ENCODE measurements at regions of chr20 and their contacts with region 1.

Region 1: GRCh38 chr20:50189681-50190582 is 698 bp upstream of the CEBPB start:
- DNase-seq: peak; percentile 92 to 96
- ATAC-seq: peak; percentile 61 to 65 (median 64)
- H3K4me3 ChIP-seq: peak overlapping the region; percentile 86
- H3K27ac ChIP-seq: peak overlapping the region; percentile 97
- H3K4me1 ChIP-seq: no peaks in the 10 kb centered on the region
- H3K27me3 ChIP-seq: no peaks in the 10 kb centered on the region
- CTCF ChIP-seq: peak; percentile 71

Region 2: GRCh38 chr20:50267041-50267865 is 77.3 kb after region 1 on chr20:
- intact Hi-C with region 1: no loop called
- DNase-seq: peak; percentile 73 to 77
- ATAC-seq: peak; percentile 15 to 32 (median 28)
- H3K4me3 ChIP-seq: no peak overlapping the region
- H3K27ac ChIP-seq: no peak overlapping the region
- H3K4me1 ChIP-seq: peaks cover 6% of the 10 kb centered on the region
- H3K27me3 ChIP-seq: no peaks in the 10 kb centered on the region
- CTCF ChIP-seq: no peak

Region 3: DNA sequence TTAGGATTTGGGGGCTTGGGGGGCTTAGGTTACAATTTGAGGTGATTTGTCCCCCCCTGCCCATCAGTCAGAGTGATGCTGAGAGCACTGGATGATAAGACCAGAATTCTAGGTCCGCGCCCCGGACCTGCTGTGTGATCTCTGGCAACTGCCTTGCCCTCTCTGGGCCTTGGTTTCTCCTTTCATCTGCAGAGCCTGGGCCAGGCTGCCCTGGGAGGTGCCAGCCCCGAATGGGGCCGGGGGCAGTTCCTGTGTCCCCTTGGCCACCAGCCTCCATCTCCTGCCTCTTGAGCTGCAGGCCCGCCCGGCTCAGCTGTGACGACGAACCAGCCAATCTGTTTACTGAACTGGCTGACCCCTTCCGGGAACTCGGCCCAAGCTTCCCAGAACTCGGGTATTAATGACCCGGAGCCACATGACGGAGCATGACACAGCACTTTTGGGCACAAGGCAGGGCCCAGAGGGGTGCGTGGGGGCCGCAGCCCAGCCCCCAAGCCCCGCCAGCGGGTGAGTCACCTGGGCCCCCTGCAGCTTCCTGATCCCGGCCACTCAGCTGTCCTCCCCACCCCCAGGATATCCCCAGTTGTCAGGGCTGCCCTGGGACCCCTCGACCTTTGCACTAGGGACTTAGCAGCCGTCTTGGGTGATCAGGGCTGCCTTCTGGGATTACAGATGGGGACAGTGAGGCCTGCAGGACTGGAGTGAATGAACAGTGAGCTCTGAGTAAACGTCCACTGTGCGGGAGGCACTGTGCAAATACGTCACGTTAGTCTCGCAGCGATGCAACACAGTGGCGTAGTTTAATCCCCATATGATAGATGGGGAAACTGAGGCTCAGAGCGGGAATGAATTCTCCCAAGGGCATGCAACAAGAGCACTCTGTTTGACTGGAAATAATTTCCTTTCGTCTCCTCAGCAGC is 102.7 kb after region 1 on chr20:
- intact Hi-C with region 1: loop called in 1 of 2 experiments (anchors 5 kb)
- DNase-seq: peak; percentile 97
- ATAC-seq: peak; percentile 84 to 88 (median 86)
- H3K4me3 ChIP-seq: no peak overlapping the region
- H3K27ac ChIP-seq: peak overlapping the region; percentile 89
- H3K4me1 ChIP-seq: peaks cover 16% of the 10 kb centered on the region
- H3K27me3 ChIP-seq: no peaks in the 10 kb centered on the region
- CTCF ChIP-seq: no peak

Region 4: DNA sequence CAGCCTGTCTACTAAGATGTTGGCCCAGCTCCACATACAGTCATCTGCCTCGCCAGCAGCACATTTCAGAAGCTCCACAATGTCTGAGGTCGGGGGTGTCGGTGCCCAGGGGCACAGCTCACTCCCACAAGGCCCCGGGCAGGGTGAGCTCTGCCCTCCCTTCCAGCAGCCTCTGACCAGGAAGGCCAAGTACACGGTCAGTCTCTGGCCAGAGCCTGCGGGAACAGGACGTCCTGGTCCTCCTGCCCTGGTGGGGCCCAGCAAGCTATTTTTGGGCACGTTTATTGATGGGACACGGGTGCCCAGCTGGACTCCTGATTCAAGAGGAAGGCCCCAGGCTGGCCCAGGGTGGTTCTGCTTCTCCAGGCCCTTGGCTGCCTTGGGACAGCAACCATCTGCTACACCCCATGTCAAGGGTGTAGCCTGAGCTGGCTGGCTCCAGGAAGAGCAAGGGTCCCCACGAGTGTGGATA is 205.4 kb after region 1 on chr20:
- intact Hi-C with region 1: loop called (anchors 2 to 5 kb)
- DNase-seq: peak; percentile 90 to 97
- ATAC-seq: peak; percentile 53 to 79 (median 74)
- H3K4me3 ChIP-seq: no peak overlapping the region
- H3K27ac ChIP-seq: peak overlapping the region; percentile 97
- H3K4me1 ChIP-seq: peaks cover 56% of the 10 kb centered on the region
- H3K27me3 ChIP-seq: no peaks in the 10 kb centered on the region
- CTCF ChIP-seq: no peak

Region 5: GRCh38 chr20:50569864-50570836 is 380.2 kb after region 1 on chr20:
- intact Hi-C with region 1: loop called in 1 of 2 experiments (anchors 2 kb)
- DNase-seq: no peak
- ATAC-seq: peak; percentile 44 to 48 (median 44)
- H3K4me3 ChIP-seq: no peak overlapping the region
- H3K27ac ChIP-seq: peak overlapping the region; percentile 56
- H3K4me1 ChIP-seq: peaks cover 43% of the 10 kb centered on the region
- H3K27me3 ChIP-seq: no peaks in the 10 kb centered on the region
- CTCF ChIP-seq: no peak

Region 6: DNA sequence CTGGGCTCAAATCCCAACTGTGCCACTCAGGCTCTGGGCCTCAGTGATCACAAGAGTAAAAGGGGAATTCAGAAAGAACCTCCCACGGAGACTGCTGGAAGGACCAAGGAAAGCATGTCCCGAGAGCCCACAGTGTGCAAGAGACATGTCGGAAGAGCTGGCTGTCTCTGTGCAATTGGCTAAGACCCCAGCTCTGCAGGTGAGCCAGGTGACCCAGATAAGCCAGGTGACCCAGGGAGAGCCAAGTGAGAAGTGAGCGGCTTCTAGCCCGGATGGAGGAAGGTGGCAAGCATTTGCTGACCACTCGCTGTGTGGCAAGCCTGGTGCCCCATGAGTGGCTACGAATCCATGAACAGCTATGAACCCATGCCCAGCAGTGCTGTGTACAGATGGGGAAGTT is 442.3 kb after region 1 on chr20:
- intact Hi-C with region 1: loop called in 1 of 2 experiments (anchors 5 kb)
- DNase-seq: no peak
- ATAC-seq: no peak
- H3K4me3 ChIP-seq: no peak overlapping the region
- H3K27ac ChIP-seq: no peak overlapping the region
- H3K4me1 ChIP-seq: peaks cover 11% of the 10 kb centered on the region
- H3K27me3 ChIP-seq: no peaks in the 10 kb centered on the region
- CTCF ChIP-seq: no peak